ENCODE measurements at regions of chr11 and their contacts with region 1.

Region 1: GRCh38 chr11:65873318-65874156 is 937 bp upstream of the EFEMP2 start:
- DNase-seq: peak; percentile 94
- H3K4me3 ChIP-seq: peak overlapping the region; percentile 50 to 52
- H3K27ac ChIP-seq: peak overlapping the region; percentile 87 to 92
- H3K4me1 ChIP-seq: peaks cover 3% of the 10 kb centered on the region
- H3K27me3 ChIP-seq: no peaks in the 10 kb centered on the region
- CTCF ChIP-seq: peak in 1 of 4 experiments; percentile 24
- POLR2A ChIP-seq: peak; percentile 93

Region 2: GRCh38 chr11:65859200-65859811 is 14.2 kb before region 1 on chr11:
- intact Hi-C with region 1: loop called (anchors 2 kb)
- DNase-seq: peak; percentile 99
- H3K4me3 ChIP-seq: peak overlapping the region; percentile 99
- H3K27ac ChIP-seq: peak overlapping the region; percentile 94 to 96
- H3K4me1 ChIP-seq: peaks cover 12% of the 10 kb centered on the region
- H3K27me3 ChIP-seq: no peaks in the 10 kb centered on the region
- CTCF ChIP-seq: peak in 1 of 4 experiments; percentile 32
- POLR2A ChIP-seq: peak; percentile 87

Region 3: GRCh38 chr11:65981972-65982823 is 108.7 kb after region 1 on chr11:
- intact Hi-C with region 1: no loop called
- DNase-seq: no peak
- H3K4me3 ChIP-seq: no peak overlapping the region
- H3K27ac ChIP-seq: no peak overlapping the region
- H3K4me1 ChIP-seq: no peaks in the 10 kb centered on the region
- H3K27me3 ChIP-seq: no peaks in the 10 kb centered on the region
- CTCF ChIP-seq: no peak
- POLR2A ChIP-seq: no peak

Region 4: DNA sequence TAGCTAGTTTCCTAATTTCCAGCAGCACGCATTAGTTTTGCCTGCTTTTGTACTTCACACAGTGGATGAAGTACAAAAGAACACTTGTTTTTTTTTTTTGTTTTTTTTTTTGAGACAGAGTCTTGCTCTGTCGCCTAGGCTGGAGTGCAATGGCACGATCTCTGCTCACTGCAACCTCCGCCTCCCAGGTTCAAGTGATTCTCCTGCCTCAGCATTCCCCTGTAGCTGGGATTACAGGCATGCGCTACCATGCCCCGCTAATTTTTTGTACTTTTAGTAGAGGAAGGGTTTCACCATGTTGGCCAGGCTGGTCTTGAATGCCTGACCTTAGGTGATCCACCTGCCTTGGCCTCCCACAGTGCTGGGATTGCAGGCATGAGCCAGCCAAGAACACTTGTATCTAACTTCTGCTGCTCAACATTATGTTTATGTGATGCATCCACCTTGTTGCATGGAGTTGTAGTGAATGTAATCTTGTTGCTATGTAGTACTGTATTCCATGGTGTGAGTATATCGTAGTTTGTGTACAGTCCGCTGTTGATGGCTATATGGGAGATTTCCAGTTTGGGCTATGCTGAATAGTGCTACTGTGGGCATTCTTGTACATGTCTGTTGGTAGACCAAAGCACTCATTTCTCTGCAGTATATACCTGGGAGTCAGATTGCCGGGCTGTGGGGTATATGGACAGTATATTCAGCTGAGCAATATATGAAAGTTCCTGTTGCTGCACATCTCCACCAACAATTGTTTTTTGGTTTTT is 213.8 kb after region 1 on chr11:
- intact Hi-C with region 1: no loop called
- DNase-seq: no peak
- H3K4me3 ChIP-seq: no peak overlapping the region
- H3K27ac ChIP-seq: no peak overlapping the region
- H3K4me1 ChIP-seq: no peaks in the 10 kb centered on the region
- H3K27me3 ChIP-seq: no peaks in the 10 kb centered on the region
- CTCF ChIP-seq: no peak
- POLR2A ChIP-seq: no peak

Measured in prostate gland (tissue), 2 donors.